ENCODE measurements at regions of chr1 and their contacts with region 1.

Region 1: GRCh38 chr1:3219005-3219790 is 150.2 kb downstream of the PRDM16 start:
- DNase-seq: peak; percentile 83 to 98 (median 88)

Region 2: DNA sequence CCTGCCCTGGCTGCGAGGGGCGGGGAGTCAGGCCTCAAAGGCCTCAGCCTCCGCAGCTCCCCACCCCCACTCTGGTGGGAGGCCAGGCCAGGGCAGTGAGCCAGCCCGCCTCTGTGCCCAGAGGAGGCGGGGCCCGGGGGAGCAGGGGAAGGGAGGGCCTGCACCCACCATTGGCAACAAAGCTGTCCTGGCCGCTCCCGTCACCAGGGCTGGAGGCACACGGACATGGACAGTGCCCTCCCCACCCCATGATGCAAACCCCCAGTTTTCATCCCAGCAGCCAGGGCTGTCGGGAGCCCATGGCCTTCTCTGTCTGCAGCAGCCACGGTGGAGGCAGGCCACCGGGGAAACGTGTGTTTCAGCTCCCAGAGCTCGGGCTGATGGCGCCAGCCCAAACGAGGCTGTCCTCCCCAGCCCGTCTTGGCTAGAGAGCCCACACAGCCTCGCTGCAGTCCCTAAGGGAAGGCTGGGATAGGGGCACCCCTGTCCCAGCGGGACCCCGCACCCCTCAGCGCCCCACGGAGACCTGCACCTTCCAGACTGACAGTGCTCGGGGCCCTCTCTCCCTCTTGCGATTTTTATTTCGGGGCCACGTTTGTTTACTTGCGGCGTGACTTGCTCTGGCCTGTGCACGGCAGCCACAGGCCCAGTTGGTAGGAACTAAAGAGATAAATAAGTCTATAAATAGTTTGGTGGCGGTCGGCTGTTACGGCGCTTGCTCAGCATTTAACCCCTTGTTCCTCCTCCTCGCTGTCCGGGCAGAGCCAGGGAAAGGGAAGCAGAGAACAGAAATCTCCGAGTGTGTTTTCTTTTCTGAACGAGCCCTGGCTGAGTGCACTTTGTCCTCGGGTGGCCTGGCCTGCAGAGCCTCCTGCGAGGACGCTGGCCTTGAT is 48.4 kb before region 1 on chr1:
- intact Hi-C with region 1: loop called (anchors 5 kb)
- DNase-seq: peak; percentile 65 to 96 (median 76)

Region 3: DNA sequence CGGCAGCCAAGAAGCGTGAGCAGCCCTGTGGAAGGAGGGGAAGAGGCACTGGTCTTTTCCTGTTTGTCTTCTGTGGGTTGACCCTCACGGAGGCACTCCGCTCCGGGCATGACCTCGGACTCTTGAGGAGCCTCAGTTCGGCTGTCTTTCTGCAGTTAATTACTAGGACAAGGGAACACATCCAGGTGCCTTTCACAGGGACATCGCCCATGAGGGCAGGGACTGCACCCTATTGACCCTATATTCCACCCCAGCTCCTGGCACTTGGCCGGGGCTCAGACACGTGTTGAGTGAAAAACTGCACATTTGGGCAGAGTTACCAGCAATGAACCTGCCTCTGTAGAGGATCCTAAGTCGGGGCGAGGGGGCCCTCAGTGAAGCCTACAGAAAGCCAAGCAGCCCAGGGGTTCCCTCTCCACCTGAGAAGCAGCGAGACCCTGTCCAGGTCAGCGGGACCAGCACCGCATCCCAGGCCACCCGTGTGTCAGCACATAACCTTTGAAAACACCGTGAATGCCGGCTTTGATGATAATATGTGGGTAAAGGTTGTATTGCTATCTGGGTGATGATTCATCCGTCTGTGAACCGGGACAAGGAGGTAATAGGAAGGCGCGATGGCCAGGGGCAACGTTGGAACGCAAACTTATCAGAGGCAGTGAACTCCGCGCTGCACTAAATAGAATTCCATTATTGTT is 73.8 kb after region 1 on chr1:
- intact Hi-C with region 1: no loop called
- DNase-seq: no peak

Measured in posterior cingulate gyrus (tissue), 11 donors.